ENCODE measurements at regions of chr11 and their contacts with region 1.

Region 1: GRCh38 chr11:119205574-119206510 is at the start of gene CBL:
- DNase-seq: peak; percentile 89 to 97 (median 96)
- H3K4me3 ChIP-seq: peak within 1 kb of the TSS; percentile 79
- H3K4me3 Mint-ChIP-seq: peak within 1 kb of the TSS; percentile 91 to 99 (median 98)
- H3K27ac ChIP-seq: peak within 1 kb of the TSS; percentile 54
- H3K27ac Mint-ChIP-seq: peak within 1 kb of the TSS; percentile 83 to 97 (median 94)
- H3K4me1 ChIP-seq: peaks cover 31% of the 10 kb centered on the region
- H3K4me1 Mint-ChIP-seq: peaks cover 31 to 45% (median 37%) of the 10 kb centered on the region in 3 donors
- H3K27me3 ChIP-seq: no peaks in the 10 kb centered on the region
- H3K27me3 Mint-ChIP-seq: peaks cover 0 to 2% of the 10 kb centered on the region in 2 donors
- total RNA-seq, gene CBL: 25.9 to 26.1 TPM

Region 2: GRCh38 chr11:119262668-119263351 is 57.0 kb after region 1 on chr11:
- CTCF ChIA-PET with region 1: interaction called, 14 read pairs
- POLR2A ChIA-PET with region 1: interaction called, 5 read pairs
- DNase-seq: no peak
- H3K4me3 ChIP-seq: peak overlapping the region; percentile 17
- H3K4me3 Mint-ChIP-seq: no peak overlapping the region
- H3K27ac ChIP-seq: no peak overlapping the region
- H3K27ac Mint-ChIP-seq: no peak overlapping the region
- H3K4me1 ChIP-seq: peaks cover 84% of the 10 kb centered on the region
- H3K4me1 Mint-ChIP-seq: peaks cover 50 to 52% (median 51%) of the 10 kb centered on the region in 3 donors
- H3K27me3 ChIP-seq: no peaks in the 10 kb centered on the region
- H3K27me3 Mint-ChIP-seq: no peaks in the 10 kb centered on the region

Region 3: DNA sequence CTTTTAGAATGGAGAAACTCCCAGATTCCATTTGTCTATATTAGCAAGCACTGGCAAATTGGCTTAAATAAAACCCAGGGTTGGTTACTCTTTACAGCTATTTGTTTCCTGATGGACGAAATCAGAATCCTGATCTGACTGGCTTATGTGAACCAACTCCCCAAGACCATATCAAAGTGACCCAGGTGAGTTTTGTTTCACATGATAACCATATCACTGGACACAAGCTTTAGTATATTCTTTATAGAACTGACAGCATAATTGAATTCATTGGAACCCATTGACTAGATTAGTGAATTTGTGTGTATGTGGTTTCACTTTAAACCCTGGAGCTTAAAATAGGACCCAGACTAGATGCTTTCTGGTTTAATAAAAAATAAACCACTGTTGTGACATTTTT is 71.8 kb after region 1 on chr11:
- CTCF ChIA-PET with region 1: interaction called, 64 read pairs
- POLR2A ChIA-PET with region 1: no interaction called
- DNase-seq: no peak
- H3K4me3 ChIP-seq: no peak overlapping the region
- H3K4me3 Mint-ChIP-seq: no peak overlapping the region
- H3K27ac ChIP-seq: no peak overlapping the region
- H3K27ac Mint-ChIP-seq: no peak overlapping the region
- H3K4me1 ChIP-seq: no peaks in the 10 kb centered on the region
- H3K4me1 Mint-ChIP-seq: peaks cover 6 to 7% (median 6%) of the 10 kb centered on the region in 3 donors
- H3K27me3 ChIP-seq: no peaks in the 10 kb centered on the region
- H3K27me3 Mint-ChIP-seq: no peaks in the 10 kb centered on the region

Region 4: DNA sequence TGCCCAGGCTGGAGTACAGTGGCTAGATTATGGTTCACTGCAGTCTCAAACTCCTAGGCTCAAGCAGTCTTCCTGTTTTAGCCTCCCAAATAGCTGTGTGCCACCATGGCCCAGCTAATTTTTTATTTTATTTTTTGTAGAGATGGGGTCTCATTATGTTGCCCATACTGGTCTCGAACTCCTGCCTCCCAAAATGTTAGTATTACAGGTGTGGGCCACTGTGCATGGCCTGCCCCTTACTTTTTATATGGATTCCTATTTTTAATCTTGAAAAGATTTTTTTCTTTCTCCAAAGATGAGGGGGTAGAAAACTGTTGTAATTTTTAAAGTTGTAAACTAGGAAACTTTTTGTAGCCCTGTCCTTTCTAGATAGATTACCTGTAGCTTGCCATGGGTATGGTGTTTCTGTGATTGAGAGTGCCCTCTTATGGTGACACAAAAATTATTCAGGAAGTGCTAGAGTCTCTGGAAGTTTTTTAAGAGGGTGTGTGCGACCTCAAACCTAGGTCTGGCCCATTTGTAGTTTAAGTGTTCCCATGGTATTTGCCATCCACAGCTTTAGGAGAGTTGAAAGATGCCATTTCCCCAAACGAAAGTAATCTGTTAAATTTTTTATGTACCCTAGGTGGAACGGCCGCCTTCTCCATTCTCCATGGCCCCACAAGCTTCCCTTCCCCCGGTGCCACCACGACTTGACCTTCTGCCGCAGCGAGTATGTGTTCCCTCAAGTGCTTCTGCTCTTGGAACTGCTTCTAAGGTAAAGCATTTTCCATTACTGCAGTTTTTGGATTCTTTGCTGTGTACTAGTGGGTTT is 78.7 kb after region 1 on chr11:
- CTCF ChIA-PET with region 1: interaction called, 64 read pairs
- POLR2A ChIA-PET with region 1: interaction called, 5 read pairs
- DNase-seq: peak in 2 of 5 donors; percentile 49 to 62
- H3K4me3 ChIP-seq: no peak overlapping the region
- H3K4me3 Mint-ChIP-seq: no peak overlapping the region
- H3K27ac ChIP-seq: no peak overlapping the region
- H3K27ac Mint-ChIP-seq: peak overlapping the region in 7 of 8 donors; percentile 5 to 66 (median 31)
- H3K4me1 ChIP-seq: peaks cover 14% of the 10 kb centered on the region
- H3K4me1 Mint-ChIP-seq: peaks cover 18 to 26% (median 25%) of the 10 kb centered on the region in 3 donors
- H3K27me3 ChIP-seq: no peaks in the 10 kb centered on the region
- H3K27me3 Mint-ChIP-seq: no peaks in the 10 kb centered on the region

Measured in CD8-positive, alpha-beta memory T cell (primary cell).